CD14-positive monocyte (primary cell): ENCODE measurements at regions of chr7 and their contacts with region 1.

Region 1: GRCh38 chr7:150356265-150356897 is 12.2 kb upstream of the REPIN1 start:
- DNase-seq: peak in 2 of 3 donors; percentile 52 to 55
- H3K4me3 ChIP-seq: no peak overlapping the region
- H3K4me3 Mint-ChIP-seq: peak overlapping the region in 1 of 2 donors; percentile 21
- H3K27ac ChIP-seq: no peak overlapping the region
- H3K27ac Mint-ChIP-seq: peak overlapping the region in 1 of 7 donors; percentile 84
- H3K4me1 ChIP-seq: peaks cover 5 to 10% of the 10 kb centered on the region in 2 donors
- H3K4me1 Mint-ChIP-seq: peaks cover 19% of the 10 kb centered on the region
- H3K27me3 ChIP-seq: no peaks in the 10 kb centered on the region
- H3K27me3 Mint-ChIP-seq: peaks cover 0 to 3% (median 2%) of the 10 kb centered on the region in 3 donors
- CTCF ChIP-seq: peak; percentile 86

Region 2: DNA sequence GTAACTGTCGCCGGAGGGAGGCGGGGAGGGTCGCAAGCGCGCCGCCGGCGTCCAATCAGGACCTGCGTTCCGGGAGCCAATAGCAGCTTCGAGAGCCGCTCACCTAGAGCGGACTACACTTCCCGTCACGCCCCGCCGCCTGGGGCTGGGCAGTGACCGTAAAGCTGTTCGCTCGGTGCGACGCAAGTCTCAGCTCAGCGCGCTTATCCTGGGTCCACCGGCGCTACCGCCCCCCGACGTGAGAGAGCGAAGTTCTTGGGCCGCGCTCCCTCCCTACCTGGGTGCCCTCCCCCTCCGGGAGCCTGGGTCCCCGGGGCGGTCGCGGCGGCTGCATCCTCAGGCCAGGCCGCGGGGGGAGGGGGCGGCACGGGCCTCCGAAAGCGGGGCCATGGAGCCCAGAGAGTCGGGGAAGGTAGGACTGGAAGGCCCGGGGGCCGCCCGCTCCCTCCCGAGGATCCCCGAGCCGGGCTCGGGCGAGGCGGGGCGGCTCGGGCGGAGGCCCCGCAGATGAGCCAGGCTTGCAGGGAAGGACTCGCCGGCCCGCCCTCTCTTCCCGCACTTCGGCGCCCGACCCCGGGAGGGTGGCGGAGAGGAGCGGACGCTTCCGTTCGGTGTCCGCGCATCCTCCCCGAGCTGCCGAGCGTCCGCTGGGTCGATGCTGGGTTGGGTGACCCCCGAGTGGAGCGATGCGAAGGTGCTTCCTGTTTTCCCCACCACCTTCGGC is 518.0 kb before region 1 on chr7 and contains the start of gene ZNF862:
- intact Hi-C with region 1: no loop called
- DNase-seq: peak; percentile 94 to 96 (median 95)
- H3K4me3 ChIP-seq: peak within 1 kb of the TSS; percentile 53 to 94 (median 82)
- H3K4me3 Mint-ChIP-seq: peak within 1 kb of the TSS; percentile 86 to 88
- H3K27ac ChIP-seq: peak within 1 kb of the TSS in 1 of 2 donors; percentile 75
- H3K27ac Mint-ChIP-seq: peak within 1 kb of the TSS in 4 of 7 donors; percentile 36 to 83 (median 56)
- H3K4me1 ChIP-seq: peaks cover 11 to 16% of the 10 kb centered on the region in 2 donors
- H3K4me1 Mint-ChIP-seq: peaks cover 18% of the 10 kb centered on the region
- H3K27me3 ChIP-seq: no peaks in the 10 kb centered on the region
- H3K27me3 Mint-ChIP-seq: peaks cover 0 to 4% (median 0%) of the 10 kb centered on the region in 3 donors
- CTCF ChIP-seq: no peak
- polyA plus RNA-seq, gene ZNF862: 1.3 to 18.4 (median 2.7) TPM

Region 3: GRCh38 chr7:150317748-150318444 is 38.5 kb before region 1 on chr7:
- intact Hi-C with region 1: no loop called
- DNase-seq: no peak
- H3K4me3 ChIP-seq: no peak overlapping the region
- H3K4me3 Mint-ChIP-seq: no peak overlapping the region
- H3K27ac ChIP-seq: no peak overlapping the region
- H3K27ac Mint-ChIP-seq: no peak overlapping the region
- H3K4me1 ChIP-seq: peaks cover 6 to 9% of the 10 kb centered on the region in 2 donors
- H3K4me1 Mint-ChIP-seq: peaks cover 20% of the 10 kb centered on the region
- H3K27me3 ChIP-seq: no peaks in the 10 kb centered on the region
- H3K27me3 Mint-ChIP-seq: no peaks in the 10 kb centered on the region
- CTCF ChIP-seq: no peak

Region 4: DNA sequence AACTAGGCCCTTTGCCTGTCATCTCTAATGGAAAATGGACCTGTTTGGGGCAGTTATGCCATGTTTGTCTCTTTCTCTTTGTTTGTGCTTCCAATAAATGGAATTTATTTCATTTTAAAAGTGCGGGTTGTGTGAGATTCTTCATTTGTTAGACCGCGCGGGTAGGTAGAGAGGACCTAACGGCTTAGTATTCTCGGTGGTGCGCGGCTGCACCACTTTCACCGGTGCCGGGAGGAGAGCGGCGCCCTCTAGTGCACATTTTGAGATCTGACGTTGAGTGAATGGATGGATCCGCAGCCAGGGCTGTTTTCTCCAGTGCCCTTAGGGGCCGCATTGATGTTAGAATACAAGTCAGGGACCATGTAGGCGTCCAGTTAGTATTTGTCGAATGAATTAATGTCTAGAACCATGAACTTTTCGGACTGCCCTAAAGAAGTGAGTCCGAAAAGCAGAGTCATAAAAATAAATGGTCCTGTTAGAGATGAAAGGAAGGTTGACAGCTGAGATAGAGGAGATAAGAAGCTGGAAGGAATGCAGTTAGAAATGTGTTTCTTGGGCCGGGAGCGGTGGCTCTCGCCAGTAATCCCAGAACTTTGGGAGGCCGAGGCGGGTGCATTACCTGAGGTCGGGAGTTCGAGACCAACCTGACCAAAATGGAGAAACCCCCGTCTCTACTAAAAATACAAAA is 64.8 kb after region 1 on chr7:
- intact Hi-C with region 1: loop called (anchors 2 kb)
- DNase-seq: peak; percentile 62 to 67 (median 63)
- H3K4me3 ChIP-seq: peak overlapping the region in 1 of 3 experiments; percentile 19
- H3K4me3 Mint-ChIP-seq: peak overlapping the region; percentile 18 to 75
- H3K27ac ChIP-seq: no peak overlapping the region
- H3K27ac Mint-ChIP-seq: peak overlapping the region in 1 of 7 donors; percentile 45
- H3K4me1 ChIP-seq: peaks cover 2 to 6% of the 10 kb centered on the region in 2 donors
- H3K4me1 Mint-ChIP-seq: peaks cover 10% of the 10 kb centered on the region
- H3K27me3 ChIP-seq: no peaks in the 10 kb centered on the region
- H3K27me3 Mint-ChIP-seq: peaks cover 6 to 16% (median 8%) of the 10 kb centered on the region in 3 donors
- CTCF ChIP-seq: peak; percentile 90

Region 5: GRCh38 chr7:151978616-151979015 is 1622.2 kb after region 1 on chr7:
- intact Hi-C with region 1: no loop called
- DNase-seq: no peak
- H3K4me3 ChIP-seq: no peak overlapping the region
- H3K4me3 Mint-ChIP-seq: no peak overlapping the region
- H3K27ac ChIP-seq: no peak overlapping the region
- H3K27ac Mint-ChIP-seq: no peak overlapping the region
- H3K4me1 ChIP-seq: no peaks in the 10 kb centered on the region
- H3K4me1 Mint-ChIP-seq: no peaks in the 10 kb centered on the region
- H3K27me3 ChIP-seq: no peaks in the 10 kb centered on the region
- H3K27me3 Mint-ChIP-seq: peaks cover 2 to 6% (median 3%) of the 10 kb centered on the region in 3 donors
- CTCF ChIP-seq: no peak